Psoas muscle (tissue), 8 donors: ENCODE measurements at regions of chr15 and their contacts with region 1.

Region 1: DNA sequence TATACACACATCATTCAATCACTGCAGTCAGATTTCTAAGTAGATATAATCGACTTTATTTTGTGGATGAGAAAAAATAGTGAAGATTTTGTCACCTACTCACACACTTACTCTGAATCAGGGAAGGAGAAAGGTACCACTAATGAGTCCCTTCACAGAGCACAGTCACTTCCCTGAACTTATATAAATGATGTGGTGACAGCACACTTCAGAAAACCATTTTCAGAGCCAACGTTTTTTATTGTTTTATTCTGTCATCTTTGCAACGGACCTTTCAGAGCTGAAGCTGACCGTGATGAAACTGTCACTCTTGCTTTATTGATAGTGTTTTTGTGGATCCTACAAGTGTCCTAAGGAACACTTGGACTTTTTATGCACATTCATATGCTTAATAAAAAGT is 956.6 kb downstream of the SQOR start:
- DNase-seq: no peak
- ATAC-seq: no peak
- H3K4me3 ChIP-seq: no peak overlapping the region
- H3K27ac ChIP-seq: no peak overlapping the region
- H3K4me1 ChIP-seq: no peaks in the 10 kb centered on the region
- H3K27me3 ChIP-seq: no peaks in the 10 kb centered on the region
- CTCF ChIP-seq: no peak

Region 2: GRCh38 chr15:46644501-46645481 is 53.3 kb after region 1 on chr15:
- intact Hi-C with region 1: loop called in 1 of 2 experiments (anchors 5 kb)
- DNase-seq: no peak
- ATAC-seq: no peak
- H3K4me3 ChIP-seq: no peak overlapping the region
- H3K27ac ChIP-seq: no peak overlapping the region
- H3K4me1 ChIP-seq: no peaks in the 10 kb centered on the region
- H3K27me3 ChIP-seq: no peaks in the 10 kb centered on the region
- CTCF ChIP-seq: no peak

Region 3: DNA sequence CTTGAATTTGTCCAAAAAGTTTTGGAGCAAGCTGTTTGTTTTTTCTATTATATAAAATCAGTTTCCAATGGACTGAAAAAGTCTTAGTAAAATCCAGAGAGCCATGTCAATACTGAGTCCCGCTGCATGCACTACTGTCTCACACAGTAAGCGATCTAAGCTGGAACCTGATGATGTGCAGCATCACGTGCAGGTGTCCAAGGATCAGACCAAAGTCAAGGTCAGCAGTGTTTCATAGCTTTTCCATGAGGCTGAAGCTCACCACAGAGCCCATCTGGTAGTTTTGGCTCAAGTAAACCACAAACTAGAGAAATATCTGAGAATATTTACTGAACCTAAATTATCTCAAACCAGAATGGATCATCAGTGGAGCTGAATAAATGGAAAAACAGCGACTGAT is 341.9 kb after region 1 on chr15:
- intact Hi-C with region 1: no loop called
- DNase-seq: no peak
- ATAC-seq: no peak
- H3K4me3 ChIP-seq: no peak overlapping the region
- H3K27ac ChIP-seq: no peak overlapping the region
- H3K4me1 ChIP-seq: no peaks in the 10 kb centered on the region
- H3K27me3 ChIP-seq: no peaks in the 10 kb centered on the region
- CTCF ChIP-seq: no peak